ENCODE measurements at regions of chr12 and their contacts with region 1.

Region 1: DNA sequence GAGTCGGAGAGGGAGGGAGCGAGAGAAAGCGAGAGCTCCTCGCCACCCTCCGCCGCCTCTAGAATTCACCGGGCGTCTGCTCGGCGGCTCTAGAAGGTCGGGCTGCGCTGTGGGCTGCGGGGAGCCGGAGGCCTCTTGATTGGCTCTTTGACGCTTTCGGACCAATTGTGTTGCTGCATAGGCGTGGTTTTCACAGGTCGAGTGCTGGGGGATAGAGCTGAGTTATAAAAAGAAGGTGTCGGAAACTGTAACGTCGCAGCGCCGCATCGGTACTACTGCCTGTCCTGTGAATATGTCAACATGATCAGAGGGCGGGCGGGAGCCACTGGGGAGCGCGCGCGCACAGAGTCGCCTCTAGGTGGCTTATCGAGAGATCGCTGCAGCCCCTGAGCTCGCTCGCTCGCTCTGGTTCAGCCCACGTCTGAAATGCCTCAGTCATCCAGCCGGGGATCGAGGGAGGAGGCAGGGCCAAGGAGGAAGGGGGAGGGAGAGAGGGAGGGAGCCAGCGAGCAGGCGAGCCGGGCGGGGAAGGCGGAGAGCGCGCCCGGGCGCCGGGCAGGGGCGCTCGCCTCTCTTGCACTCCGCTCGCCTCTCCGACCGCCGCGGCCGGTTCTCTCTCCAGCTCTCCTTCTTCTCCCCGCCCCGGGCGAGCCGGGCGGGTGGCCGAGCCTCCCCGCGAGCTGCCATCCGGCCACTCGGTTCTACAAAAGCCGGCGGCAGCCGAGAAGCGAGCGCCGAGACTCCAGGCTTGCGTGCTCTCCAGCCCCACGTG is at the start of gene TBX3:
- DNase-seq: peak; percentile 99
- ATAC-seq: peak; percentile 81
- H3K4me3 ChIP-seq: peak within 1 kb of the TSS; percentile 69
- H3K27ac ChIP-seq: peak within 1 kb of the TSS; percentile 95
- H3K4me1 ChIP-seq: peaks cover 29% of the 10 kb centered on the region
- H3K27me3 ChIP-seq: no peaks in the 10 kb centered on the region
- CTCF ChIP-seq: peak; percentile 66
- POLR2A ChIP-seq: peak; percentile 98
- RAD21 ChIP-seq: peak; percentile 60
- total RNA-seq, gene TBX3: 15.8 and 18.6 TPM in 2 replicates

Region 2: DNA sequence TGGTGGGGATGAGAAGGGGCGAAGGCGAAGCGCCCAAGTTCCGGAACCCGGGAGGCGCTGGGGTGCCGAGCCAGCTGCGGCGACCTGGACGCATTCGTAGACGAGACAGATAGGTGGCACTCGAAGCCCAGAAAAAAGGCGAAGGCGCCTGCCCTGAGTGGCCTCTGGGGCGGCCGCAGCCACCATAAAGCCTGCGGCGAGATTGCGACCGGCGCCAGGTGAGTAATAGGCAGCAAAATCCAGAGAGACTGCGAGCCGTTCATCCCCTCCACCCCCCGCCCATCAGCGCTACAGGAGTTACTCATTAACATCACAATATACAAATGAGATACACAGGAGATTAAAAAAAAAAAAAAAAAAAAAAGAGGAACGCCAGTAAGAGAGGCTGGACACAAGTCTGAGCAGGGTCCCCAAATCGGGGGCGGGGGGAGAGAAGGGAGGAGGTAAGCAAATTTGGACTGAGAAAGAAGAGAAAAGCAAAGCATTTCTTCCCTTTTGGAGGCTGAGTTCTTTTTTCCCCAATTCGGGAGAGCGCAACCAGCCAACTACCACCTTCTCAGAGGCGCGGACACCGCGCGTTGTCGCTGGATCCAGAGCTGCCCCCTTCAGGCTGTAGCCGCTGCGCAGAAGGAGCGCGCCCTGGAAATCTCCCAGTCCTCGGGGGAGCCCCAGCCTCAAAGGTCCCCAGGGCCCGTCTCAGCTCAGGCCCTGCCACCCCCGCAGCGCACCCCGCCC is 16.0 kb before region 1 on chr12:
- CTCF ChIA-PET with region 1: interaction called, 6 read pairs
- POLR2A ChIA-PET with region 1: interaction called, 16 read pairs
- dilution Hi-C with region 1: no loop called
- in situ Hi-C with region 1: no loop called
- intact Hi-C with region 1: loop called (anchors 1 kb)
- DNase-seq: peak; percentile 84
- ATAC-seq: peak; percentile 59
- H3K4me3 ChIP-seq: peak overlapping the region; percentile 40
- H3K27ac ChIP-seq: peak overlapping the region; percentile 89
- H3K4me1 ChIP-seq: peaks cover 4% of the 10 kb centered on the region
- H3K27me3 ChIP-seq: no peaks in the 10 kb centered on the region
- CTCF ChIP-seq: peak; percentile 75
- POLR2A ChIP-seq: peak; percentile 23; the same call in 1 of the 2 replicates
- RAD21 ChIP-seq: peak; percentile 84

Region 3: DNA sequence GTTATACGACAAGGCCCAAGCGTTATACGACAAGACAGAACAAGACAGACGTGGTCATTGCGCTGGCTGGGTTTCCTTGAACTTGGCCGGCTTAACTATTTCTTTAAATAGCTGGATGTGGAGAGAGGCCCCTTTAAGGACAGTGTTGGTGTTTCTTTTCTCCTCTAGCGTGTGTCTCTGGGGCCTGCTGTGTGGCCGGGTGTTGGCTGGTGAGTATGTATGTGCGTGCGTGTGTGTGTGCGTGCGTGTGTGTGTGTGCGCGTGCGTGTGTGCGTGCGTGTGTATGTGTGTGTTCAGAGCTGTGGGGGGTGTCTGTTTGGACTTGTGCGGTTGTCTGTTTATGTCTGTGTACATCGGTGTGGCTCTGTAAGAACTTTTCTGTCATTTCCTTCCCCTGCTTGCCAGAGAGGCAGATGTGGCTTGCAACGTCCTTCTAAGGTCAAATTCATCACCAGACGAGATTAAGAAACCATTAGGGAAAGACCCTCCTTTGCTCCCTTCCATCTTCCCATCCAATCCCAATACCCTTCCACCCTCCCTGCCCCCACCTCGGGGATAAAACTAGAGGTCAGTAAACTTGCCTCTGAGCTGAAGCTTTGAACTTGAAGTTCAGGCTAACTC is 78.3 kb after region 1 on chr12:
- CTCF ChIA-PET with region 1: interaction called, 3 read pairs
- POLR2A ChIA-PET with region 1: interaction called, 6 read pairs
- dilution Hi-C with region 1: no loop called
- in situ Hi-C with region 1: loop called (anchors 5 kb)
- intact Hi-C with region 1: no loop called
- DNase-seq: peak; percentile 95
- ATAC-seq: peak; percentile 87
- H3K4me3 ChIP-seq: no peak overlapping the region; the same call in 1 of the 2 replicates
- H3K27ac ChIP-seq: peak overlapping the region; percentile 87
- H3K4me1 ChIP-seq: peaks cover 6% of the 10 kb centered on the region
- H3K27me3 ChIP-seq: no peaks in the 10 kb centered on the region
- CTCF ChIP-seq: no peak
- POLR2A ChIP-seq: no peak
- RAD21 ChIP-seq: no peak; the same call in 1 of the 2 replicates

Region 4: DNA sequence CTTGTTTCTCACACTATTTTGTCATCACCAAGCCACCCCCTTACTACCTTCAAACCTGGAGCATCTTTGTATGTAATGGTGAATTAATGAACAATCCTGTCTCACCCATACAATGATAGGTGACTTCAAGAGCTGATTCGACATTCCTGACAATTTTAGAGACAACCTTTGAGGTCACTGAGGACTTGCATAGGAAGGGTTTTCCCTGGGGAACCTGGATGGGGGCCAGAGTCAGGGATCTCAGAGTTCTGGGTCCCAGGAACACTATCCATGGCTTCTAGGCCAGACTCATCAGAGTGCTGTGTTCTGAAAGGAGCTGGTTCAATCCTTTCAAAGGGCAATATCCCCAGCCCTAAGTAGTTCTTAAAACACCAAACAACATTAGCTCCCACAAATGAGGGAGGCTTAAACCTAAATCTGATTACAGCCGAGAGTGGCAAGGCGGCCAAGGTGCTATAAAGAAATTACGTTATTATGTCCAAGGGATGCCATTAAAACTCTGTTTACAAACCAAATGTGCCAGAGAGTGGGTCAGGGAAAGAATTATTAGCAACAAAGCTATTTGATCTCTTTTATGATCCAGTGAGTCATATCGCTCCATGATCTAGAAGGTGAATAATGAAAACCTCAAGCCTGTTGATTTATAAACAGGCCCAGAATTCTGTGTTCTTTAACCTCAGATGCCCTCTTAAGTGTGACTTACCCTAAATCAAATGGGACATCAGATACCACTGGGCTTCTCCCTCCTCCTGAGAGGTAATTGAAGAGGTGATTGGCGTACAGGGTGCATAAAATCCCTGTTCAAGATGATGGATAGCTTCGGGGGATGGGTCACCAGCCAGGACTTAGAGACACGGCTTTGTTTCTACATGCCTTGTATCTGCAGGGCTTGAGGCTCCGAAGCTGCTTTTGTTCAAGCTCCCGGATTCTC is 229.9 kb after region 1 on chr12:
- CTCF ChIA-PET with region 1: no interaction called
- POLR2A ChIA-PET with region 1: interaction called, 4 read pairs
- dilution Hi-C with region 1: no loop called
- in situ Hi-C with region 1: loop called (anchors 5 kb)
- intact Hi-C with region 1: loop called (anchors 5 kb)
- DNase-seq: peak; percentile 65
- ATAC-seq: peak; percentile 11; the same call in 1 of the 2 replicates
- H3K4me3 ChIP-seq: no peak overlapping the region
- H3K27ac ChIP-seq: no peak overlapping the region
- H3K4me1 ChIP-seq: peaks cover 19% of the 10 kb centered on the region
- H3K27me3 ChIP-seq: no peaks in the 10 kb centered on the region
- CTCF ChIP-seq: no peak
- POLR2A ChIP-seq: 0 out of 2 replicates have a peak, but pooled peaks have one; percentile 8
- RAD21 ChIP-seq: no peak

Region 5: DNA sequence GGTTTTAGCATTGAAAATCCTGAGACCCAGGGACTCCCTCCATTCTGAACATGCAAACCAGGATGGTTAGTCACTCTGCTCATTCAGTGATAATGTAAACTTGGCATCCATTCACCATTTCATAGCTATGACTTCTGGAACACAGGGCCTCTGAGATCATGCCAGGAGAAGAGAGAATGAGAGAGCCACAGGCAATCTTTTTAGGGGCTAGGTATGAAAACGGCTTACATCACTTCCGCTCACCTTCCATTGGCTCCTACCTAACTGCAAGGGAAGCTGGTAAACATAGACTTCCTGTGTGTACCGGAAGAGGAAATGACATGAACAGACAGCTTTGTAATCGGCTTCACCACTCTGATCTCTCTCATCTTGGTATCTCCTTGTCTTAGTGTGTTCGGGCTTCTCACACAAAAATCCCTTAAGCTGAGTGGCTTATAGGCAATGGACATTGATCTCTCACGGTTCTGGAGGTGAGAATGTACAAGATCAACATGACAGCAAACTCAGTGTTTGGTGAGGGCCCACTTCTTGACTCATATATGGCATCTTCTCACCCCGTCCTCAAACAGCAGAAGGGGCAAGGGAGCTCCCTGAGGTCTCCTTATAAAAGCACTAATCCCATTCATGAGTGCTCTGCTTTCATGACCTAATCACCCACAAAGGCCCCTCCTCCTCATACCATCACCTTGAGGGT is 465.5 kb after region 1 on chr12:
- CTCF ChIA-PET with region 1: no interaction called
- POLR2A ChIA-PET with region 1: interaction called, 9 read pairs
- dilution Hi-C with region 1: no loop called
- in situ Hi-C with region 1: loop called (anchors 5 kb)
- intact Hi-C with region 1: loop called (anchors 1 kb)
- DNase-seq: peak; percentile 99
- ATAC-seq: peak; percentile 97
- H3K4me3 ChIP-seq: peak overlapping the region; percentile 23; the same call in 1 of the 2 replicates
- H3K27ac ChIP-seq: peak overlapping the region; percentile 93
- H3K4me1 ChIP-seq: peaks cover 3% of the 10 kb centered on the region
- H3K27me3 ChIP-seq: no peaks in the 10 kb centered on the region
- CTCF ChIP-seq: no peak
- POLR2A ChIP-seq: peak; percentile 69; the same call in 1 of the 2 replicates
- RAD21 ChIP-seq: peak; percentile 34; the same call in 1 of the 2 replicates

Region 6: GRCh38 chr12:115404761-115405470 is 720.6 kb after region 1 on chr12:
- CTCF ChIA-PET with region 1: no interaction called
- POLR2A ChIA-PET with region 1: no interaction called
- dilution Hi-C with region 1: no loop called
- in situ Hi-C with region 1: no loop called
- intact Hi-C with region 1: loop called (anchors 5 kb)
- DNase-seq: peak; percentile 92
- ATAC-seq: peak; percentile 82
- H3K4me3 ChIP-seq: no peak overlapping the region
- H3K27ac ChIP-seq: peak overlapping the region; percentile 52
- H3K4me1 ChIP-seq: peaks cover 8% of the 10 kb centered on the region
- H3K27me3 ChIP-seq: no peaks in the 10 kb centered on the region
- CTCF ChIP-seq: no peak
- POLR2A ChIP-seq: no peak
- RAD21 ChIP-seq: peak; percentile 13; the same call in 1 of the 2 replicates

Measured in IMR-90 (cell line).